PC-9 (cell line): ENCODE measurements at regions of chrX and their contacts with region 1.

Region 1: DNA sequence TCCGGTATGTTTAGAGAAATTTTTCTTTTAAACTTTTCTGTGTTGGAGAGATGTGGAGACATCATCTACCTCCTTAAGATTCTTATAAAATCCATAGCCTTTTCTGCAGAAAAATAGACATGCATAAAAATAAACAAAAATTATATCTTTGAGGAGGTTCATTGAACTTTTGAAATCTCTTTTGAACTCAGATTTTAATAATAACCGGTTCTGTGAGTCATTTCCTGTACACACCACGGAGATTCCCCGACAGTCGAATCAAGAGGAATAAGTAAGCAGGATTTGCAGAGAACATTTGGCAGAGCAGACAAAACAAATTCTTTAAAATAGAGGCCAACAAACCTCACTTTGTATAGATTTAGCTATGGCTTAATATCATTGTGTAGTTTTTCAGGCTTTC is 918.7 kb upstream of the POU3F4 start:
- DNase-seq: no peak
- H3K4me3 ChIP-seq: no peak overlapping the region
- H3K27ac ChIP-seq: no peak overlapping the region
- H3K4me1 ChIP-seq: no peaks in the 10 kb centered on the region
- H3K27me3 ChIP-seq: no peaks in the 10 kb centered on the region
- CTCF ChIP-seq: no peak

Region 2: DNA sequence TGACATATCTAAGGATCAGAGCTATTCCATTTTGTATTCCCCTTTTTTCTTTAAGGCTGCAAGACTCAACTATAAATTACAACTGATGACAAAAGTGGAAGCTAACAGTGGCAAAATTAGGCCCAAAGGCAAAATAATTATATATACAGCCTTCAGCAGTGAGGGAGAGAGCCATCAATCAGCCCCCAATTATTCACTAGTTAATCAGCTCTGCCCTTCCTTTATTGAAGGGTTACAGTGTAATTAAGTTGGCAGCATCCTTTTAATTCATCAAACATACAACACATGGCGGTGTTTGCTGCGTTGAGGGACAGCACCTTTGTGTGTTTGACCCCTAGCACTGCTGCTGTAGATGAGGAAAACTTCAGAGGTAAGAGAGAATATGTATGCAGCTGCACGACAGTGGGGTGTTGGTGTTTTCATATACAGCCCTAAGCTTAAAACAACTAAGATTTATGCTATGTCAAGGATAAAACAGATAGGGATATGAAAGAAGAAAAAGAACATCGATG is 55.3 kb before region 1 on chrX:
- CTCF ChIA-PET with region 1: interaction called, 10 read pairs
- POLR2A ChIA-PET with region 1: no interaction called
- intact Hi-C with region 1: no loop called
- DNase-seq: no peak
- H3K4me3 ChIP-seq: no peak overlapping the region
- H3K27ac ChIP-seq: no peak overlapping the region
- H3K4me1 ChIP-seq: no peaks in the 10 kb centered on the region
- H3K27me3 ChIP-seq: no peaks in the 10 kb centered on the region
- CTCF ChIP-seq: no peak